Right ventricle myocardium inferior (tissue), 1 donor: ENCODE measurements at regions of chr2 and their contacts with region 1.

Region 1: GRCh38 chr2:33529771-33530351 is 53.4 kb downstream of the RASGRP3 start:
- DNase-seq: no peak
- ATAC-seq: no peak

Region 2: DNA sequence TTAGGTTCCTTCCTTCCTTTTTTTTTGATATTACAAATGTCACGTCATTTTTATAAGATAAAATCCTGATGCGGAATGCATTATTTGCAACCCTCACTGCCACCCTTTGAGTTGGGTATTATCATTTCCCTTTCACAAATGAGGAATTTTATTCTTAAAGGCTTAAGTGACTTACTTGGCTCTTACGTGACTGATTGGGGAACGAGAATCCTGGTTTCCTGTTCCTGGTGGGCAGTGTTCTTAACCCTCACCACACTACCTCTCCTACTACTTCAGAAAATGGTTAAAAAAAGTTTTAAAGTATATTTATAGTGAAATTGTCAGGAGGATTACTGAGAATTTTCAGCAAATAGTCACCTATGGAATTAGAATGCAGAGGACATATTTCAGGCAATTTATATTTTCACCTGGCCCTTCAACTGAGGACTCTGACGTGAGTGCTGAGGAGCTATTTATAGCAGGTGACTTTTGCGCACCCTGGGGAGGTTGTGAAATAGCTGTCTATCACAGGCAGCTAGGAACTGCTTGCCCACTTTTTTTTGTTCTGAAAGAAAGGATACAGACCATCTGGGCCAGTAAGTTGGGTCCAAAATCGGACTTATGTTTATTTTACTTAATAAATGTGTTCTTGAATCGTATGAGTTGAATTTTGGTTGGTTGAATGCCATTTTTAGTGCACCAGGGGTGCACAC is 72.2 kb before region 1 on chr2:
- intact Hi-C with region 1: loop called (anchors 5 kb)
- DNase-seq: peak; percentile 69
- ATAC-seq: peak; percentile 96